Mammary epithelial cell (primary cell): ENCODE measurements at regions of chr12 and their contacts with region 1.

Region 1: GRCh38 chr12:95820102-95820703 is 29.6 kb upstream of the NTN4 start:
- DNase-seq: peak; percentile 41
- H3K4me3 ChIP-seq: no peak overlapping the region
- H3K27ac ChIP-seq: no peak overlapping the region
- H3K4me1 ChIP-seq: no peaks in the 10 kb centered on the region
- H3K27me3 ChIP-seq: peaks cover 3% of the 10 kb centered on the region
- CTCF ChIP-seq: peak; percentile 53 to 72

Region 2: GRCh38 chr12:95582230-95583058 is 237.8 kb before region 1 on chr12:
- CTCF ChIA-PET with region 1: no interaction called
- dilution Hi-C with region 1: no loop called
- in situ Hi-C with region 1: loop called in 1 of 2 experiments (anchors 25 kb)
- intact Hi-C with region 1: loop called (anchors 1 kb)
- DNase-seq: peak; percentile 23
- H3K4me3 ChIP-seq: no peak overlapping the region
- H3K27ac ChIP-seq: no peak overlapping the region
- H3K4me1 ChIP-seq: no peaks in the 10 kb centered on the region
- H3K27me3 ChIP-seq: no peaks in the 10 kb centered on the region
- CTCF ChIP-seq: peak; percentile 45 to 53

Region 3: DNA sequence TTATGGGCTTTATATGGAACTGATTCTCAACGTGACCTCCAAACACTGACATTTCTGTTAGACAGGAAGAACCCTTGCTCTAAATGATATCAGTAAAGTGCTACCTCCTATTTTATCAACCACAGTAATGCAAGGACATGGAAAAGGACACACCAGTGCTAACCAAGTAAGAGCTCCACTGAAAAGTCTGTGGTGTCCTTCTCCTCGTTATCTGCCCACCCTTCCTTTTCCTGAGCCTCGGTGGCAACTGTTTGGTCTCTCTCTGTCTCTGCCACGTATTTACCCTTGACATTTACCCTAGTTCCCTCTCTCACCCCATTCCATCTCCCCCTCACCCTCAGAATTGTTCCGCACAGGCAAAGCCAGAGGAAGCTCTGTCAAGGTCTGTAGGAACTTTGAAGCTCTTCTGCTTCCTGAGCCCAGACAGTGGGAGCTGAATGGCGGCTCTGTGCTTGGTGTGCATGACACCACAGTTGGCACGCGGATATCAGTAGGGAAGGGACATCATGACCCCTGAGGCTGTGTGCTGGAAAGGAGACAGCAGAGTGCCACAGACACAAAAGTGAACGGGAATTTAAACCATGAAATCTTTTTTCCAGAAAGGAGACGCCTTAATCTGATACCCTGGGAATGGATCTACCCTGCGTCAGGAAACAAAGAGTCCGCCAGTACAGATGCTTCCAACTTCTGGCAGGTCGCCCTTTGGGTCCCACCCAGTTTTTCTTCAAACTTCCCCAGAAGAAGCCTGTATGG is 80.5 kb before region 1 on chr12:
- CTCF ChIA-PET with region 1: interaction called, 4 read pairs
- dilution Hi-C with region 1: no loop called
- in situ Hi-C with region 1: no loop called
- intact Hi-C with region 1: loop called (anchors 5 kb)
- DNase-seq: no peak
- H3K4me3 ChIP-seq: no peak overlapping the region
- H3K27ac ChIP-seq: no peak overlapping the region
- H3K4me1 ChIP-seq: peaks cover 3% of the 10 kb centered on the region
- H3K27me3 ChIP-seq: no peaks in the 10 kb centered on the region
- CTCF ChIP-seq: no peak

Region 4: DNA sequence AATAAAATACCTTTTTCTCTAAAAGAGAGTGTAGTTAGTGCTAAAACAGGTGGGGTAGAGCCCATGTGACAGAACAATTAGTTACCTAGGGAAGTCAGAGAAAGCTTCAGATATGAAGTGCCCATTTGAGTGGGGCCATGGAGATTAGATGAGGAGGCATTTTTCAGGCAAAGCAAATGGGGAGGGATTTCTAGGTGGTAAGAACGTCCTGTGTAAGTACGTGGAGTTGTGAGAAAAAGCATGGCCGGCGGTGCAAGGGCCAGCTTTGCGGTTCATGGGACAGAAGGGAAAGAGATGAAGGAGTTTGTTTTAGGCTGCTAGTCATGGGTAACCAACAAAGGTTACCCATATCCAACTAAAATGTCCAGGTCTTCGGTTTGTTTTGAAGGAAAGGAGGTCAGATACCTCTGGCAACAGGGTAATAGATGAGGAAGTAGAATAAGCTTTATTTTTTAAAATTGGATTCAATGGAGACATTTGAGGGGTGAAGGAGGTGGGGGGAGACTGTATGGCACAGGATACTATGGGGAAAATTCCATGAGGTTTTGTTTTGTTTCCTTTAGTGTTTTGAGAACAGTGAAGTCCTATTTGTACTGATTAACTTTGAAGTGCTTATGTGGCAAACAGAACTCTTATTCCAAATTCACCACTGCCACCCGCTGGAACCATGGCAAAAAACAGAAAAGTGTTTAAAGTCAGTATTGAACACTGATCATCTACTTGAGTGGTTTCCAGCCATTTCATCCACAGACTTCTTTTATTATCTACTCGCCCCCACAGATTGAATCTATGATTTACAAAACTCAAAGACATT is 28.6 kb after region 1 on chr12:
- CTCF ChIA-PET with region 1: no interaction called
- dilution Hi-C with region 1: no loop called
- in situ Hi-C with region 1: no loop called
- intact Hi-C with region 1: loop called (anchors 1 kb)
- DNase-seq: peak; percentile 23
- H3K4me3 ChIP-seq: no peak overlapping the region
- H3K27ac ChIP-seq: no peak overlapping the region
- H3K4me1 ChIP-seq: no peaks in the 10 kb centered on the region
- H3K27me3 ChIP-seq: peaks cover 3% of the 10 kb centered on the region
- CTCF ChIP-seq: peak; percentile 21 to 41

Region 5: GRCh38 chr12:95881331-95881955 is 61.2 kb after region 1 on chr12:
- CTCF ChIA-PET with region 1: no interaction called
- dilution Hi-C with region 1: no loop called
- in situ Hi-C with region 1: no loop called
- intact Hi-C with region 1: no loop called
- DNase-seq: no peak
- H3K4me3 ChIP-seq: no peak overlapping the region
- H3K27ac ChIP-seq: no peak overlapping the region
- H3K4me1 ChIP-seq: no peaks in the 10 kb centered on the region
- H3K27me3 ChIP-seq: no peaks in the 10 kb centered on the region
- CTCF ChIP-seq: no peak

Region 6: GRCh38 chr12:95998611-95999286 is 178.5 kb after region 1 on chr12:
- CTCF ChIA-PET with region 1: no interaction called
- dilution Hi-C with region 1: no loop called
- in situ Hi-C with region 1: no loop called
- intact Hi-C with region 1: loop called (anchors 2 kb)
- DNase-seq: peak; percentile 40
- H3K4me3 ChIP-seq: no peak overlapping the region
- H3K27ac ChIP-seq: no peak overlapping the region
- H3K4me1 ChIP-seq: peaks cover 16% of the 10 kb centered on the region
- H3K27me3 ChIP-seq: no peaks in the 10 kb centered on the region
- CTCF ChIP-seq: peak; percentile 73 to 74